Activated CD8-positive, alpha-beta T cell treated with anti-CD3 and anti-CD28 coated beads for 36 hours (primary cell): ENCODE measurements at regions of chr17 and their contacts with region 1.

Region 1: GRCh38 chr17:40303009-40303657 is 5.8 kb upstream of the RARA start:
- DNase-seq: peak; percentile 63
- ATAC-seq: peak; percentile 59
- H3K4me3 Mint-ChIP-seq: no peak overlapping the region
- H3K27ac Mint-ChIP-seq: no peak overlapping the region
- H3K4me1 Mint-ChIP-seq: peaks cover 28% of the 10 kb centered on the region
- H3K27me3 Mint-ChIP-seq: no peaks in the 10 kb centered on the region
- CTCF ChIP-seq: peak; percentile 76

Region 2: GRCh38 chr17:40287494-40288369 is 15.4 kb before region 1 on chr17 and contains the start of gene CDC6:
- CTCF ChIA-PET with region 1: interaction called, 25 read pairs
- POLR2A ChIA-PET with region 1: interaction called, 184 read pairs
- intact Hi-C with region 1: no loop called
- DNase-seq: peak; percentile 100
- ATAC-seq: peak; percentile 89
- H3K4me3 Mint-ChIP-seq: peak within 1 kb of the TSS; percentile 99
- H3K27ac Mint-ChIP-seq: peak within 1 kb of the TSS; percentile 96
- H3K4me1 Mint-ChIP-seq: peaks cover 54% of the 10 kb centered on the region
- H3K27me3 Mint-ChIP-seq: no peaks in the 10 kb centered on the region
- CTCF ChIP-seq: no peak
- total RNA-seq, gene CDC6: 110 to 118 TPM

Region 3: GRCh38 chr17:40317880-40318829 is 15.0 kb after region 1 on chr17:
- CTCF ChIA-PET with region 1: interaction called, 52 read pairs
- POLR2A ChIA-PET with region 1: interaction called, 101 read pairs
- intact Hi-C with region 1: no loop called
- DNase-seq: peak; percentile 95
- ATAC-seq: peak; percentile 68
- H3K4me3 Mint-ChIP-seq: peak overlapping the region; percentile 98
- H3K27ac Mint-ChIP-seq: peak overlapping the region; percentile 99
- H3K4me1 Mint-ChIP-seq: peaks cover 77% of the 10 kb centered on the region
- H3K27me3 Mint-ChIP-seq: no peaks in the 10 kb centered on the region
- CTCF ChIP-seq: no peak

Region 4: DNA sequence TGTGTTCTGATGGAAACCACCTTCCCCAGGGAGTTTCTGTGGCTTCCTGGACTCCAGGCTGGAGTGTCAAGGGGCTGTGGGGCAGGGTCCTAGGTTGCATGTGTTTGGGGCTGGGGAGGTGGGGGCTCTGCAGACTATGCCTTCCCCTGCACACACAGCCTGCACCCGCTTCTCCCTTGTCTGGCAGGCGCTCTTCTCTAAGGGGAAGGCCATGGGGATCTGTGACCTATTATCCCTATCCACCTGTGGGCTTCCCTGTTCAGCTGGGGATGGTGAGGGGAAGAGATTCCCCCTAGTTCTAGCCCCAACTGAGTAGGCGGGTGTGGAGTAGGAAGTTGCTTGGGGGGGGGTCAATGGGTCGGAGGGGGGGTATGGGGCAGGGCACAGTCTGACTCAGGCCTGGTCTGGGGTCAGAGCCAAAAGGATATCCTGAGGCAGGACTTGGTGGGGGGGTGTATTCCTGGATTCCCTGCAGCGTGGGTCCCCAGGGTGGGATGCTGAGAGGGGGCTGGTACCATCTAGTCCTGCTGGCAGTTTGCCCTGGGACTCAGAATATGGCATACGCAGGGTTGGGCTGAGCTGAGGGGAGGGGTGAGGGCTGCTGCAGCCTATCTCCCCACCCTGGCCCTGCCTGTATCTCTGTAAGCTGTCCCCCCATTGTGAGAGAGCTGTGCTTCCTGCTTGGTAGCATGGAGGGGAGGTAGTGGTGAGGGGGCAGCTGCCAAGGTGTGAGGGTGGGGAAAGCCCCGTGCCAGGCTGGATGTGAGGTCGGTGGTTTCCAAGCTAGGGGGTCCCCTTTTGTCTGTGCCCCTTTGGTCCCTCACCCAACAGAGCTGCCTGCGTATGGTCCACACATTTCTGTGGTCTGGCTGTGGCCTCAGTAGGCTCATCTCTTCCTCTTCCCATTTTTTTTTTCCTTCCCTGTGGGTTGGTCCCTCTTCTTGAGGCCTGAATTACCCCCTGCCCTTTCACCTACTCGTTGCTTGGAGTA is 20.6 kb after region 1 on chr17:
- CTCF ChIA-PET with region 1: interaction called, 23 read pairs
- POLR2A ChIA-PET with region 1: interaction called, 101 read pairs
- intact Hi-C with region 1: no loop called
- DNase-seq: peak; percentile 91
- ATAC-seq: peak; percentile 57
- H3K4me3 Mint-ChIP-seq: peak overlapping the region; percentile 98
- H3K27ac Mint-ChIP-seq: peak overlapping the region; percentile 99
- H3K4me1 Mint-ChIP-seq: peaks cover 86% of the 10 kb centered on the region
- H3K27me3 Mint-ChIP-seq: no peaks in the 10 kb centered on the region
- CTCF ChIP-seq: no peak

Region 5: GRCh38 chr17:40331743-40332641 is 28.9 kb after region 1 on chr17:
- CTCF ChIA-PET with region 1: interaction called, 23 read pairs
- POLR2A ChIA-PET with region 1: interaction called, 101 read pairs
- intact Hi-C with region 1: no loop called
- DNase-seq: peak; percentile 59
- ATAC-seq: peak; percentile 18
- H3K4me3 Mint-ChIP-seq: peak overlapping the region; percentile 15
- H3K27ac Mint-ChIP-seq: peak overlapping the region; percentile 80
- H3K4me1 Mint-ChIP-seq: peaks cover 71% of the 10 kb centered on the region
- H3K27me3 Mint-ChIP-seq: no peaks in the 10 kb centered on the region
- CTCF ChIP-seq: no peak

Region 6: DNA sequence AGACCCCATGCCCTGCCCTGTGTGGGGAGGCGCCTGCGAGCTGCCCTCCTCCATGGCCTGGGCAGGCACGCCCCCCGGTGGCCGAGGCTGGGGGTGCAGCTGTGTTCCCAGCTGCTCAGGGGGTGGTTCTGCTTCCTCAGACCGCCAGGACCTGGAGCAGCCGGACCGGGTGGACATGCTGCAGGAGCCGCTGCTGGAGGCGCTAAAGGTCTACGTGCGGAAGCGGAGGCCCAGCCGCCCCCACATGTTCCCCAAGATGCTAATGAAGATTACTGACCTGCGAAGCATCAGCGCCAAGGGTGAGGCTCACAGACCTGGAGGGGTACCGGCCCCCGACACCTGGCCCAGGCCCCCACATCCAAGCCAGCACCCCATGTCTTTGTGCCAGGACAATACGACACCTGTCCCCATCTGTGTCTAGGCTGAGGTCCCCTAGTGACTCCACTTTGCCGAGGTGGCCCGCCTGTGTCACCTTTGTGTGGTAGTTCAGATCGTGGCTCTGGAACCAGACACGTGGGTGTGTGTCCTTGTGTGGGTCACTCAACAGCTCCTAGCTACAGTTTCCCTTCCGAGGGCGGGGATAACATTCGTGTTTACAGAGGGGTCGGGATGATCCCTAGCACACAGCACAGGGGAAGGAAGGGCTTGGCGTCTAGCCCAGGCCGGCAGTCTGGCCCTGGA is 52.1 kb after region 1 on chr17:
- CTCF ChIA-PET with region 1: interaction called, 780 read pairs
- POLR2A ChIA-PET with region 1: interaction called, 79 read pairs
- intact Hi-C with region 1: loop called (anchors 2 kb)
- DNase-seq: peak; percentile 84
- ATAC-seq: peak; percentile 84
- H3K4me3 Mint-ChIP-seq: no peak overlapping the region
- H3K27ac Mint-ChIP-seq: no peak overlapping the region
- H3K4me1 Mint-ChIP-seq: peaks cover 19% of the 10 kb centered on the region
- H3K27me3 Mint-ChIP-seq: no peaks in the 10 kb centered on the region
- CTCF ChIP-seq: peak; percentile 95

Region 7: GRCh38 chr17:40362696-40363110 is 59.6 kb after region 1 on chr17:
- CTCF ChIA-PET with region 1: interaction called, 780 read pairs
- POLR2A ChIA-PET with region 1: interaction called, 79 read pairs
- intact Hi-C with region 1: no loop called
- DNase-seq: peak; percentile 93
- ATAC-seq: peak; percentile 90
- H3K4me3 Mint-ChIP-seq: peak overlapping the region; percentile 72
- H3K27ac Mint-ChIP-seq: no peak overlapping the region
- H3K4me1 Mint-ChIP-seq: peaks cover 6% of the 10 kb centered on the region
- H3K27me3 Mint-ChIP-seq: peaks cover 4% of the 10 kb centered on the region
- CTCF ChIP-seq: peak; percentile 88